ENCODE measurements at regions of chr19 and their contacts with region 1.

Region 1: DNA sequence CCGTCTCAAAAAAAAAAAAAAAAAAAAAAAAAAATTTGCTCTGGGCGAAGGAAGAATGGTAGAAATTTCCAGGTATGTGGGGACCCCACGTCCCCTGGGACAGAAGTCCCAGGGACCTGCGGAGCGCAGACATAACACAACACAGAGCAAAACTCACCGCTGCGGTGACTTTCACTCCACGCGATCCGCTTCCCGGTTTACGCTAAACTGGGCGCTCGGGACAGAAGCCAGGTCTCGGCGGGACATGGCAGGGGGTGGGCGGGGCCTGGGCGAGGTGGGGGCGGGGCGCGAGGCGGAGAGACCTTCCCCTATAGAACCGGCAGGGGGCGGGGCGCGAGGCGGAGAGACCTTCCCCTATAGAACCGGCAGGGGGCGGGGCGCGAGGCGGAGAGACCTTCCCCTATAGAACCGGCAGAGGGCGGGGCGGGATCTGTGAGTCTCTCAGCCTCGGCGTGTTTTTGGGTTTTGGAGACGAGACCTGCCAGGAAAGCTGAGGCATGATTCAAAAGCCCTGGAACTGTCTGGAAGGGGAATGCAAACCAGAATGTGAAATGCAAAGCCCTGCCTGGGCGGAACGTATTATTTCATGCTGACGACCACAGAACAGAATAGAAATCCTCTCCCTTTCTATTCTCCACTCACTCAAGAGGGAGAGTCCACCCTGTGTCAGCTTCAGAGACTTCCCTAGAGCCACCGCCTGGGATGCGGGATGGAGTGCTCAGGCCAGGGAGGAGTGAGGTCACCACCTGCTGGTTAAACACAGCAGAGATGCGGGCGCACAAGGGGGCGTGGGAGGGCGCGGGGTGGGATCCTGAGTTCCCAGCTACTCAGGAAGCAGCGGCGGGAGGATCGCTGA is 20.2 kb upstream of the ERVV-1 start:
- DNase-seq: peak; percentile 55
- H3K4me3 ChIP-seq: peak overlapping the region; percentile 65
- H3K27ac ChIP-seq: peak overlapping the region; percentile 73
- H3K27me3 ChIP-seq: no peaks in the 10 kb centered on the region
- CTCF ChIP-seq: peak; percentile 53

Region 2: GRCh38 chr19:51891193-51891747 is 1102.3 kb before region 1 on chr19:
- CTCF ChIA-PET with region 1: interaction called, 17 read pairs
- POLR2A ChIA-PET with region 1: no interaction called
- DNase-seq: no peak
- H3K4me3 ChIP-seq: no peak overlapping the region
- H3K27ac ChIP-seq: no peak overlapping the region
- H3K27me3 ChIP-seq: no peaks in the 10 kb centered on the region
- CTCF ChIP-seq: no peak

Region 3: DNA sequence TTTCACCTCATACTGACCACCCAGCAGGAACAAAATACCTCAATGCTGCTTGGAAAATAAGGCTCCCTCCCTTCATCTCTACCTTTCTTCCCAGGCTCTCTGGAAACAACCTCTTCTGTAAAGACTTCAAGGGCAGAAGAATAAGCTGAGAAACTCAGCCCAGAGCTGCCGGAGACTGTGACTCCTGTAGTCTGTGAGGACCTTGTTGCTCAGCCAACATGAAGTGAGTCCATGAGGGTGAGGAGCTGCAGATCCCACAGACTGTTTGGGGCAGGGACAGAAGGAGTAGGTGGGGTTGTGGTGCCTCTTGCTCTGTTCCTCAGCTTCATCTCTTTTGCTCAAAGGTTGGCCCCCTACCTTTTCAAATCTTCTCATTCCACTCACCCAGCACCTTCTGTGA is 1311.6 kb after region 1 on chr19:
- CTCF ChIA-PET with region 1: no interaction called
- POLR2A ChIA-PET with region 1: interaction called, 10 read pairs
- DNase-seq: no peak
- H3K4me3 ChIP-seq: no peak overlapping the region
- H3K27ac ChIP-seq: no peak overlapping the region
- H3K27me3 ChIP-seq: no peaks in the 10 kb centered on the region
- CTCF ChIP-seq: no peak

Measured in AG04450 (cell line).